ENCODE measurements at regions of chr1 and their contacts with region 1.

Region 1: DNA sequence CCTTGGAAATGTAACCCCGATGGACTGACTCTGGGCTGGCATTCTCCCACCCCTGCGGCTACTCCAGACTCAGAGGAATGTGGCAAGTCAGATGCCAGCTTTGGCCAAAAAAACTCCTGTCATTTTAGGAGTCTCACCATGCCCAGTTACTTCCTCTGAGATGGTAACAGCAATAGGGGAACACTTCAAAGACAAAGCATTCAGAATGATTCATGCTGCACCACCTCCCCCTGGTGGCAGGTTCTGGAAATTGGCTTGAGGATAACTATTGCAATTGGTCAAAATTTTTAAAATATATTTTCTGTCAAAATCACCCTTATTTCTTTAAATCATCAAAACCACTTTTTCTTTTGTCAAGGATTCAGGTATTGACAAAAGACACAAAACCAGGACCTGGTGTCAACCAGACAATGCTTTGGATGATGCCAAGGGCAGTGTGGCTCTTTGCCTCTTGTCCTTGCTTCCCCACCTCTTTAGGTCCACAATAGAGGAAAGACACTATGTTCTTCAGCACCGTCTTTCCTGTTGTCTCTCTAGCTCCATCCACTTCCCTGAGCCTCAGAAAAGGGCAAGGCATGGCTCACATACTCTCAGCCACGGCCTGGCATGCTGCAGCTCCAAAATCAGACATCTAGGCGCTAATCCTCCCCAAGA is 9.9 kb upstream of the CDCA8 start:
- DNase-seq: peak; percentile 91
- H3K4me3 Mint-ChIP-seq: no peak overlapping the region
- H3K27ac Mint-ChIP-seq: no peak overlapping the region
- H3K4me1 Mint-ChIP-seq: peaks cover 3% of the 10 kb centered on the region
- H3K27me3 Mint-ChIP-seq: no peaks in the 10 kb centered on the region

Region 2: GRCh38 chr1:35958558-35958957 is 1723.9 kb before region 1 on chr1:
- CTCF ChIA-PET with region 1: no interaction called
- intact Hi-C with region 1: no loop called
- DNase-seq: no peak
- H3K4me3 Mint-ChIP-seq: no peak overlapping the region
- H3K27ac Mint-ChIP-seq: no peak overlapping the region
- H3K4me1 Mint-ChIP-seq: peaks cover 3% of the 10 kb centered on the region
- H3K27me3 Mint-ChIP-seq: no peaks in the 10 kb centered on the region

Region 3: DNA sequence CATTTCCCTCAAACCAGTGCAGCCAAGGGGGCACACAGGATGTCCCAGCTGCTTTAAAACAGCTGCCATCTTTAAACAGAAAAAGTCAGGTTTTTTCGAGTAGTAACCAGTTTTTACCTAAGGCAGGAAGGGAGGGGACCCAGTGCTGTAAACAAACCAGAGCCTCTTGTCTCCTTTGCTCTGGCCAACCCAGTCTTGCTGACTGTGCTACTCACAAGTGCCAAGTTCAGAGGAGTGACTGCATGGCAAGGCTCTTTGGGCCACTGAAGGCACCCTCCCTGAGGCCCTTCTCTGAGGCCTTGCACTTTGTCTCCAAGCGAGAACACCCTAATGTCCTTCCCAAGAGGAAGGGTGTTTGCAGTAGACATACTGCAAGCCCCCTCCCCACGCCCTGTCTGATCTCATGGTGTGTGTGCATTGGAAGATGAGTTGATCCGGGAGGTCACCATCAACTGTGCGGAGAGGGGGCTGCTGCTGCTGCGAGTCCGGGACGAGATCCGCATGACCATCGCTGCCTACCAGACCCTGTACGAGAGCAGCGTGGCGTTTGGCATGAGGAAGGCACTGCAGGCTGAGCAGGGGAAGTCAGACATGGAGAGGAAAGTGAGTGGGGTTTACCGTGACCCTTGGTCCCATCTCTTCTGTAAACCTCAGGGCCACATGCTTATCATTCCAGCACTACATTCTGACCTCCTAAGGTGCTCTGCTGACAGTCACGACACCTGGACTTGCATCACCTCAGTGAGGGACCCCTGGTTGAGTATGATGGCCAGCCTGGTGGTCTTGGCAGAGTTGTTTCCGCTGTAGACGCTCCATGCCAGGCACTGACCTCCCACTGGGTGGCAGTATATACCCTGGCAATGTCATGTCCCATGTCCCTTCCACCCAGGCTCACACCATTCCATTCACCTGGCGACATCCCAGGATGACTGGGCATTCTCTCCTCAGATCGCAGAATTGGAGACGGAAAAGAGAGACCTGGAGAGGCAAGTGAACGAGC is 121.0 kb before region 1 on chr1:
- CTCF ChIA-PET with region 1: interaction called, 5 read pairs
- intact Hi-C with region 1: loop called (anchors 1 kb)
- DNase-seq: peak; percentile 53
- H3K4me3 Mint-ChIP-seq: no peak overlapping the region
- H3K27ac Mint-ChIP-seq: no peak overlapping the region
- H3K4me1 Mint-ChIP-seq: peaks cover 2% of the 10 kb centered on the region
- H3K27me3 Mint-ChIP-seq: no peaks in the 10 kb centered on the region

Region 4: GRCh38 chr1:37602750-37603694 is 79.4 kb before region 1 on chr1:
- CTCF ChIA-PET with region 1: interaction called, 85 read pairs
- intact Hi-C with region 1: loop called (anchors 1 kb)
- DNase-seq: peak; percentile 50
- H3K4me3 Mint-ChIP-seq: no peak overlapping the region
- H3K27ac Mint-ChIP-seq: no peak overlapping the region
- H3K4me1 Mint-ChIP-seq: no peaks in the 10 kb centered on the region
- H3K27me3 Mint-ChIP-seq: no peaks in the 10 kb centered on the region

Region 5: DNA sequence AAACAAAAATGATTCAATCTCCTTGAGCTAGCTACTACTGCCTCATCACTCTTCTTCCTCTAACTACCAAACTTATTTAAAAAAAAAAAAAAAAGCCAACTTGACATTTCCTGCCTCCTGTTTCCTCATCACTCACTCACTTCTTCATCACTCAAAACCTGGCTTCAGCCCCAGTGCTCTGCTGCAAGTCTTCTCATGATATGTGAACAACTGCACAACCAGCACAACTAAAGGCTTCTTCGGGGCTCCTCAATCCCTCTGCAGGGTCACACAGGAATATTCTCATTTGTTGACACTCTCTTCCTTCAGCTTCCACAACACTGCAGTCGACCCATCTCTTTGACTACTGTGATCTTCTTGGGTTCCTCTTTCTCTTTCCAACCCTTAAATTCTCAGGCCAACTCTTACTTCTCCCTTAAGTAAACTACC is 169.3 kb after region 1 on chr1:
- CTCF ChIA-PET with region 1: no interaction called
- intact Hi-C with region 1: no loop called
- DNase-seq: peak; percentile 24
- H3K4me3 Mint-ChIP-seq: no peak overlapping the region
- H3K27ac Mint-ChIP-seq: no peak overlapping the region
- H3K4me1 Mint-ChIP-seq: peaks cover 42% of the 10 kb centered on the region
- H3K27me3 Mint-ChIP-seq: no peaks in the 10 kb centered on the region

Measured in activated naive CD4-positive, alpha-beta T cell treated with anti-CD3 and anti-CD28 coated beads for 36 hours (primary cell).